CD4-positive, alpha-beta memory T cell (primary cell): ENCODE measurements at regions of chr12 and their contacts with region 1.

Region 1: DNA sequence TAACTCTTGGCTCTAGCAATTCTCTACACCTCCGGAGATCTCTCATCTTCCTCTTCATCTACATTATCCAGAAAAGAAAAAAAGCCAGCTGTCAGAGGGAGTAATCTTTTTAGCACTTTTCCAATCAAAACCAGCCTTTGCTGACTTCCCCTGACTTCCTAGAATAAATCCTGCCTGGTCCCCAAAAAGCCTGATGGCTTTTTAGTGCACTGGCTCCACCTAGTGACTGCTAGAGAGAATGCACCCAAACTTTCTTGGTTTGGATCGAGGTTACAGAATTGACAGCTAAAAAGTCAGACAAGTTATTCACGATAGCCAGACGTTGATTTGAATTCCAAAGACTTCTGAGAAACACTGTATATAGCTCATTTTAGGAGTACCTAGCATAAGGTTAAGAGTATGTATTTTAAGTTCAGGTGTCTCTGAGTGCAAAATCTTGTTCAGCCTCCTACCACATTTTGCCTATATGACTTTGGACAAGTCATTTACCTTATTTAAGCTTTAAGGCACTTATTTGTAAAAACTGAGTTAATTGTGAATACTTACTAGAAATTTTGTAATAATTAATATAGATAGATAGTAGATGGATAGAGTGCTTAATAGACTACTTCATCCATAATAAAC is 185.7 kb upstream of the GRIN2B start:
- DNase-seq: peak; percentile 22 to 37 (median 28)
- H3K4me3 ChIP-seq: no peak overlapping the region
- H3K4me3 Mint-ChIP-seq: no peak overlapping the region
- H3K27ac ChIP-seq: no peak overlapping the region
- H3K27ac Mint-ChIP-seq: no peak overlapping the region
- H3K4me1 ChIP-seq: no peaks in the 10 kb centered on the region
- H3K4me1 Mint-ChIP-seq: peaks cover 0 to 5% (median 1%) of the 10 kb centered on the region in 4 donors
- H3K27me3 ChIP-seq: no peaks in the 10 kb centered on the region
- H3K27me3 Mint-ChIP-seq: peaks cover 4 to 5% of the 10 kb centered on the region in 2 donors

Region 2: DNA sequence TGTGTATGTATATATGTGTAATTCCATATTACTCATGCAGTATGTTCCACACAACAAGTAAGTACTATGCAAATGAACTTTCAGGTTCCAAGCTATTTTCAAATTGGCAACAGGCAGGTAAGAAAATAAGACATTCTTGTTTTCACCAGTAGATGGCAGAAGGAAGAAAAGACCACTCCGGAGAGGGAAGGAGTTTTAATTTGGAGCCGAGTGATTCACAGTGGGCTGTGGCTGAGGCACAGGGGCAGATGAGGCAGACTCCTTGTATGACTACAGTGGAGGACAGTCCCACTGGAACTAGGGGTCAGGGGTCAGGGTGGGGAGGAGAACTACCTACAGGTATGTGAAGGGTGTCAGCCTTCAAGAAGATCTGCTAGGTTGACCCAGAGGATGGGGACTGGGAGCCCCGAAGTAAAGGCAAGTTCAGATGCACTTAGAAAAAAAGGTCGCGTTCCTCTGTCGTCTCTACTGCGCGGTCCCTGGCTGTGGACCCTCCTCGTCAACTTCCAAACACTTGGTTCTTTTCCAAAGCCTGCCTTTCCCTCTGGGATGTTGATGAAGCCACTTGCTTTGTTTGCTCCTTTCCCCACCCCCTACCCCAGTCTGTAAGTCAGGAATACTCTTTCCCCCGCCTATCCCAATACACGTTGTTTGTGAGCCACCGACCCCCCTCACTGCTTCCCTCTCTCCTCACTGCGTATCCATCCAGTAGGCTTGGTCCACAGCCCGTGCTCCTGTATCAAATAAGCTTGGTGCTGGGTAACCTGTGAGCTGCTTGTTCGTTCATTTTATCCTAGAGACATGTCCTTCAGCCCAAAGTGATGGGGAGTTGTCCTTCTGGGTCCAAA is 1329.9 kb before region 1 on chr12:
- CTCF ChIA-PET with region 1: no interaction called
- POLR2A ChIA-PET with region 1: no interaction called
- intact Hi-C with region 1: loop called (anchors 5 kb)
- DNase-seq: peak; percentile 38 to 49 (median 47)
- H3K4me3 ChIP-seq: no peak overlapping the region
- H3K4me3 Mint-ChIP-seq: peak overlapping the region in 5 of 8 donors; percentile 1 to 76 (median 24)
- H3K27ac ChIP-seq: no peak overlapping the region
- H3K27ac Mint-ChIP-seq: peak overlapping the region; percentile 1 to 87 (median 52)
- H3K4me1 ChIP-seq: peaks cover 18% of the 10 kb centered on the region
- H3K4me1 Mint-ChIP-seq: peaks cover 7 to 24% (median 16%) of the 10 kb centered on the region in 4 donors
- H3K27me3 ChIP-seq: no peaks in the 10 kb centered on the region
- H3K27me3 Mint-ChIP-seq: no peaks in the 10 kb centered on the region

Region 3: GRCh38 chr12:13255792-13256691 is 911.1 kb before region 1 on chr12:
- CTCF ChIA-PET with region 1: interaction called, 16 read pairs
- POLR2A ChIA-PET with region 1: no interaction called
- intact Hi-C with region 1: loop called (anchors 5 kb)
- DNase-seq: peak; percentile 57 to 71 (median 61)
- H3K4me3 ChIP-seq: no peak overlapping the region
- H3K4me3 Mint-ChIP-seq: peak overlapping the region in 2 of 8 donors; percentile 34 to 49
- H3K27ac ChIP-seq: no peak overlapping the region
- H3K27ac Mint-ChIP-seq: no peak overlapping the region
- H3K4me1 ChIP-seq: no peaks in the 10 kb centered on the region
- H3K4me1 Mint-ChIP-seq: peaks cover 0 to 3% (median 1%) of the 10 kb centered on the region in 4 donors
- H3K27me3 ChIP-seq: no peaks in the 10 kb centered on the region
- H3K27me3 Mint-ChIP-seq: peaks cover 6 to 12% of the 10 kb centered on the region in 2 donors

Region 4: DNA sequence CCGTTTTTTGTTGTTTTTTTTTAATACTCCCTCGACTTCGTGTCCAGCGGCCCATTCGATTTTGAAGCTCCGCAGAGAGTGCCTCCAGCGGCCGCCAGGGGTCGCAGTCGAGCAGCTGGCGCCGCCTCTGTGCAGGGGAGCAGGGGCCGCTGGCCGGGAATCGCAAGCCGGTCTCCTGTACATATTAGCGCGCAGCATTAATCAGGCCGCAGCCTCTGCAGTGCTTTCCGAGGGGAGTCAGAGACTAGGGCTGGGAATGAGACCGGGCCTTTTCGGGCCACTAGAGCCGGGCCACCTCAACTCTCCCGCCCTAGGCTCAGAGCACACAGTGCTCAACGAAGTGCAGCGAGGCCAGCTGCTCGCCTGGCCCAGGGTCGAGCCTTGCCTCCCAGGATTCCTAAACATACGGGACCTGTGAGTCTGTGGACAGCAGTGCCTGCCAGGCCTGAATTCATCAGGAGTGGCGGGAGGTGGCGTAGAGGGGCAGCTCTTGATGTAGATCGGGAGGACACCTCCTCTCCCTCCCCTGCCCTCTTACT is 888.8 kb before region 1 on chr12:
- CTCF ChIA-PET with region 1: interaction called, 8 read pairs
- POLR2A ChIA-PET with region 1: no interaction called
- intact Hi-C with region 1: loop called (anchors 1 kb)
- DNase-seq: peak in 4 of 5 donors; percentile 40 to 50 (median 43)
- H3K4me3 ChIP-seq: no peak overlapping the region
- H3K4me3 Mint-ChIP-seq: peak overlapping the region in 2 of 8 donors; percentile 32 to 57
- H3K27ac ChIP-seq: no peak overlapping the region
- H3K27ac Mint-ChIP-seq: no peak overlapping the region
- H3K4me1 ChIP-seq: peaks cover 4% of the 10 kb centered on the region
- H3K4me1 Mint-ChIP-seq: peaks cover 0 to 7% (median 5%) of the 10 kb centered on the region in 4 donors
- H3K27me3 ChIP-seq: peaks cover 10% of the 10 kb centered on the region
- H3K27me3 Mint-ChIP-seq: peaks cover 30 to 35% of the 10 kb centered on the region in 2 donors

Region 5: GRCh38 chr12:13362260-13362841 is 804.8 kb before region 1 on chr12:
- CTCF ChIA-PET with region 1: interaction called, 14 read pairs
- POLR2A ChIA-PET with region 1: no interaction called
- intact Hi-C with region 1: no loop called
- DNase-seq: peak in 4 of 5 donors; percentile 5 to 26 (median 14)
- H3K4me3 ChIP-seq: no peak overlapping the region
- H3K4me3 Mint-ChIP-seq: no peak overlapping the region
- H3K27ac ChIP-seq: no peak overlapping the region
- H3K27ac Mint-ChIP-seq: no peak overlapping the region
- H3K4me1 ChIP-seq: no peaks in the 10 kb centered on the region
- H3K4me1 Mint-ChIP-seq: no peaks in the 10 kb centered on the region
- H3K27me3 ChIP-seq: no peaks in the 10 kb centered on the region
- H3K27me3 Mint-ChIP-seq: peaks cover 9 to 15% of the 10 kb centered on the region in 2 donors

Region 6: GRCh38 chr12:13981990-13982389 is 185.1 kb before region 1 on chr12:
- CTCF ChIA-PET with region 1: no interaction called
- POLR2A ChIA-PET with region 1: no interaction called
- intact Hi-C with region 1: no loop called
- DNase-seq: no peak
- H3K4me3 ChIP-seq: no peak overlapping the region
- H3K4me3 Mint-ChIP-seq: peak overlapping the region in 2 of 8 donors; percentile 22 to 36
- H3K27ac ChIP-seq: no peak overlapping the region
- H3K27ac Mint-ChIP-seq: no peak overlapping the region
- H3K4me1 ChIP-seq: no peaks in the 10 kb centered on the region
- H3K4me1 Mint-ChIP-seq: peaks cover 1 to 15% (median 11%) of the 10 kb centered on the region in 4 donors
- H3K27me3 ChIP-seq: peaks cover 10% of the 10 kb centered on the region
- H3K27me3 Mint-ChIP-seq: peaks cover 42 to 49% of the 10 kb centered on the region in 2 donors

Region 7: DNA sequence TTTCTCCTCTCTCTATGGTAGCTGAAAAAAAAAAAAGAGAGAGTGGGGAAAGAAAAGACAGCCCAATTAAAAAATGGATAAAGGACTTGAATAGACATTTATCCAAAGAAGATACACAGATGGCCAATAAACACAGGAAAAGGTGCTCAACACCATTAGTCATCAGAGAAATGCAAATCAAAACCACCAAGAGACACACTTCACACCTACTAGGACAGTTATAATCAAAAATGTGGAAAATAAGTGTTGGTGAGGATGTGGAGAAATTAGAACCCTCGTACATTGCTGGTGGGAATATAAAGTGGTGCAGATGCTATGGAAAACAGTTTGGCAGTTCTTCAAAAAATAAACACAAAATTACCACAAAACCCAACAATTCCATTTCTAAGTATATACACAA is 13.3 kb before region 1 on chr12:
- CTCF ChIA-PET with region 1: interaction called, 11 read pairs
- POLR2A ChIA-PET with region 1: no interaction called
- intact Hi-C with region 1: no loop called
- DNase-seq: no peak
- H3K4me3 ChIP-seq: no peak overlapping the region
- H3K4me3 Mint-ChIP-seq: no peak overlapping the region
- H3K27ac ChIP-seq: no peak overlapping the region
- H3K27ac Mint-ChIP-seq: no peak overlapping the region
- H3K4me1 ChIP-seq: no peaks in the 10 kb centered on the region
- H3K4me1 Mint-ChIP-seq: no peaks in the 10 kb centered on the region
- H3K27me3 ChIP-seq: no peaks in the 10 kb centered on the region
- H3K27me3 Mint-ChIP-seq: peaks cover 2 to 18% of the 10 kb centered on the region in 2 donors

Region 8: DNA sequence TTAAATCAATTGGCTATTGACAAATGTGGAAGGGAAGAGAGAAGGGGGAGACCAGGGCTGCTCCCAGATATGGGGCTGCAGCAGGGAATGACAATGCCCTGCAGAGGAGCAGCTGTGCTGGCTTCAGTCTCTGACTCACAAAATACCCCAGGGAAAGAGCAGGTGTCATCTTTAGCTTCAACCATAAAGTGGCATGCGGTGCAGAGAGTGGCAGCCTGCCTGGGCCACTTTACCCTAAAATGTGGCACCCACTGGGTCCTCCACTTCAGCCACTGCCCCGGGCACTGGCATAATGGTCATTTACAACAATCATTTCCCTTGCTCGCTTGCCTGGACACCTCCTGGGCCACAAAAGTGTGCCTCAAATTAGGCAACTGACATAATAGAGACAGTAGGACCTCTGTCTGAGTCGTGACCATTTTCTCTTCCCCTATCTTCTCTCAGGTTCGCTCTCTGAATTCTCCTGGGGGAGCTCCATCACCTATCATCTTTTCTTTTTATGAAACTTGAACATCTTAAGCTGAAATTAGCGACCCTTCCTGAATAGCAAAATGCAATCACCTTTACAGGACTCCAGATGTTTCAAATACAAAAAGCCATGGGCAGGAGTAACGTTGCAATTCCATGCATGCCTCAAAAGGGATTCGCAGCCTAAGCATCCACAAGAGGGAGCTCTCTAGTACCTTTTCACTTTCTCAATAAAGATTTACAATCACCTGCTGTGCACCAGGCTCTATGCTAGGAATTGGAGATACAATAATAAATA is 18.5 kb after region 1 on chr12:
- CTCF ChIA-PET with region 1: interaction called, 19 read pairs
- POLR2A ChIA-PET with region 1: no interaction called
- intact Hi-C with region 1: no loop called
- DNase-seq: peak in 4 of 5 donors; percentile 15 to 27 (median 24)
- H3K4me3 ChIP-seq: no peak overlapping the region
- H3K4me3 Mint-ChIP-seq: peak overlapping the region in 1 of 8 donors; percentile 32
- H3K27ac ChIP-seq: no peak overlapping the region
- H3K27ac Mint-ChIP-seq: no peak overlapping the region
- H3K4me1 ChIP-seq: no peaks in the 10 kb centered on the region
- H3K4me1 Mint-ChIP-seq: peaks cover 0 to 2% (median 0%) of the 10 kb centered on the region in 4 donors
- H3K27me3 ChIP-seq: no peaks in the 10 kb centered on the region
- H3K27me3 Mint-ChIP-seq: peaks cover 5 to 6% of the 10 kb centered on the region in 2 donors

Region 9: GRCh38 chr12:14239935-14240872 is 73.1 kb after region 1 on chr12:
- CTCF ChIA-PET with region 1: no interaction called
- POLR2A ChIA-PET with region 1: no interaction called
- intact Hi-C with region 1: no loop called
- DNase-seq: peak in 2 of 5 donors; percentile 16 to 48
- H3K4me3 ChIP-seq: peak overlapping the region in 1 of 2 donors; percentile 28
- H3K4me3 Mint-ChIP-seq: peak overlapping the region; percentile 73 to 91 (median 87)
- H3K27ac ChIP-seq: peak overlapping the region; percentile 25
- H3K27ac Mint-ChIP-seq: peak overlapping the region; percentile 44 to 93 (median 90)
- H3K4me1 ChIP-seq: peaks cover 19% of the 10 kb centered on the region
- H3K4me1 Mint-ChIP-seq: peaks cover 13 to 22% (median 18%) of the 10 kb centered on the region in 4 donors
- H3K27me3 ChIP-seq: no peaks in the 10 kb centered on the region
- H3K27me3 Mint-ChIP-seq: no peaks in the 10 kb centered on the region